ENCODE measurements at regions of chrX and their contacts with region 1.

Region 1: DNA sequence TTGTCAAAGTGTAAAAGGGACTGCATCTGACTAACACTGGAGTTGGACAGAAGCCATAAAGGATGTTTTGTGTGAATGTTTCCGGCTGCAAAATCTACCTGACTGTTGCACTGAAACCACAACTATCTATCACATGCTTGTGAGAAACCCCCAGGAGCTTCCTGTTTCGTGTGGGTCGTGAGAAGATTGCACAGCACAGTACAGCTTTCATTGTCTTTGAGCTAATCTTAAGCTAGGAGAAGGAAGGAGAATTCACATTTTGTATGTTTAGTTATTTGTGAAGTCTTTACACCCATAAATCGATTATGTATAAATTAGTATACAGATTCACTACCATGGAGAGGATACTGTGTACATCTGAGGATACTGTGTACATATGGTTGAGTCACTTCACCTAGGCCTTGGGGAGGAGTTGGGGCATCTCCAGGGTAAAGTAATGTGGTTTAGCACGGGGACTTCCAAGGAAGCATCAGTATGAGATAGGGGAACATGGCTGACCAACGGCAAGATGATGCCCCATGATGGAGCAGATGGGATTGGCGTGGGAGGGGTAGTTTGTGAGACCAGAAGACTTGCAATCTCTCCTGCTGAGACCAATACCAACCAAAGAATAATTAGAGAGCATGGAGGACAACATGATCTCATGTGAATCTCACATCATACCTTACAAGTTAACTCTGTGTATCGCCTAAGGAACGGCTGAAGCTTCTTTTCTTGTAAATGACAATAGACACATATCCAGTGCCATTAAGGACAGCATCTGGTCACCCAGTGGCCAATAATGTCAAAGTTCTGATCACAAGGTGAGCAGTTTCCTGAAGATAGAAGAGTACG is 43.1 kb upstream of the FAM9C start:
- DNase-seq: peak; percentile 64
- H3K4me3 Mint-ChIP-seq: peak overlapping the region; percentile 79
- H3K27ac Mint-ChIP-seq: peak overlapping the region; percentile 100
- H3K4me1 Mint-ChIP-seq: peaks cover 94% of the 10 kb centered on the region
- H3K27me3 Mint-ChIP-seq: no peaks in the 10 kb centered on the region

Region 2: DNA sequence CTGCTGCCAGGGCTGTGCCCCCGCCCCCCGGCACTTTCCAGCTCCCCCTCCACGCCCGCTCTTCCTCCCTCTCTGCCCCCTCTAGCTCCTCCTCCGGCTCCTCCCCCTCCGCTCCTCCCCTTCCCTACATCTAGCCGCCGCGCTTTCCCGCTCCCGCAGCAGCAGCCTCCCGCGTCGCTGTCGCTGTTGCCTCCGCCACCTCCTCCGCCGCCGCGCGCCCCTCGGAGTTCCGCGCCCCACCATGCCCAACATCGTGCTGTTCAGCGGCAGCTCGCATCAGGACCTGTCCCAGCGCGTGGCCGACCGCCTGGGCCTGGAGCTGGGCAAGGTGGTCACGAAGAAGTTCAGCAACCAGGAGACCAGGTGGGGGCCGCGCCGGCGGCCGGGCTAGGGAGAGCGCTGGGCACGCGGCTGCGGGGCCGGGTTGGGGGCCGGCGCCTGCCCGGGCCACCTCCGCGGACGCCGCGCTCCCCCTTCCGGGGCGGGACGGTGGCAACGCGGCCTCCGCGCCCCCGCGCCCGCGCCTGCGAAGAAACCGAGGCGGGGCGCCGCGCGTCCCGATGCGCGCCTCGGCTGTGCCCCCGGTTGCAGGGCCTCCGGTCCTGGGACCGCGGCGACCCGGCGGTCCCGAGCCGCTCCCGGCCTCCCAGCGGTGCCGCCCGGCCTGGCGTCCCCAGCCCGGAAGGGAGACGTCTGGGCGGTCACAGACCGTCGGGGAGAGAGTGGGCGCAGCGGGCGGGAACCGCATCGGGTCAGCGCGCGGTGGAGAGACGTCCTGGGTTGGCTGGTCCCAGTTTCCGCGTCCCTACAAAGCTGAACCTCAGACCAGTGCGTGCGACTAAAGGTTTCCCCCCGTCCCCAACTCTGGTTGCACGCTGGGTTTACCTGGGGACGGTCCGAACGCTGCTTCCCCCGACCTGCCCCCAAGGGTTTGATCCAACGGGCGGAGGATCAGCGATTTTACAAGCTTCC is 296.0 kb before region 1 on chrX and contains the start of gene PRPS2:
- intact Hi-C with region 1: no loop called
- DNase-seq: peak; percentile 62
- H3K4me3 Mint-ChIP-seq: peak within 1 kb of the TSS; percentile 88
- H3K27ac Mint-ChIP-seq: peak within 1 kb of the TSS; percentile 76
- H3K4me1 Mint-ChIP-seq: peaks cover 41% of the 10 kb centered on the region
- H3K27me3 Mint-ChIP-seq: peaks cover 8% of the 10 kb centered on the region
- total RNA-seq, gene PRPS2: 115 and 116 TPM in 2 replicates

Region 3: GRCh38 chrX:12946838-12947544 is 140.5 kb before region 1 on chrX:
- intact Hi-C with region 1: loop called (anchors 1 kb)
- DNase-seq: peak; percentile 65
- H3K4me3 Mint-ChIP-seq: peak overlapping the region; percentile 49
- H3K27ac Mint-ChIP-seq: peak overlapping the region; percentile 95
- H3K4me1 Mint-ChIP-seq: peaks cover 60% of the 10 kb centered on the region
- H3K27me3 Mint-ChIP-seq: no peaks in the 10 kb centered on the region

Region 4: GRCh38 chrX:12984629-12985319 is 102.8 kb before region 1 on chrX:
- intact Hi-C with region 1: loop called (anchors 1 kb)
- DNase-seq: peak; percentile 59
- H3K4me3 Mint-ChIP-seq: peak overlapping the region; percentile 45
- H3K27ac Mint-ChIP-seq: peak overlapping the region; percentile 93
- H3K4me1 Mint-ChIP-seq: peaks cover 65% of the 10 kb centered on the region
- H3K27me3 Mint-ChIP-seq: no peaks in the 10 kb centered on the region

Region 5: DNA sequence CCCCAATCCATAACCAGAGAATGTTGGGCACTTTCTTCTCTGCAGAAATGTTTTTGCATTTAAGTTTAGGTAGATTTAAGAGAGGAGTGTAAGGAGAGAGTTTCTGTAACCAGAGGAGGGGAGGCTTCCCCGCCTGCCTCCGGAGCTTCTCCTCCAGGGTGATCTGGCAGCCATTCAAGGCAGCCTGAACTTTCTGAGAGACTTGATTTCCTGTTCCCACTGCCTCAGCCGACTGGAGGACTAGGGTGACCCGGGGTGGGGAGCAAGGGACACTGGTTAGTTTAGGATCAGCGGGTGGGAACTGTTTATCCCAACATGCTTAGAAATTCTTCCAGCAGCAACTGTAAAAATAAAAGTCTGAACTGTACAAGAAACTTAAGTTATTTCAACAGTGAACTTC is 58.2 kb before region 1 on chrX:
- intact Hi-C with region 1: no loop called
- DNase-seq: no peak
- H3K4me3 Mint-ChIP-seq: peak overlapping the region; percentile 7
- H3K27ac Mint-ChIP-seq: peak overlapping the region; percentile 44
- H3K4me1 Mint-ChIP-seq: peaks cover 57% of the 10 kb centered on the region
- H3K27me3 Mint-ChIP-seq: no peaks in the 10 kb centered on the region

Region 6: DNA sequence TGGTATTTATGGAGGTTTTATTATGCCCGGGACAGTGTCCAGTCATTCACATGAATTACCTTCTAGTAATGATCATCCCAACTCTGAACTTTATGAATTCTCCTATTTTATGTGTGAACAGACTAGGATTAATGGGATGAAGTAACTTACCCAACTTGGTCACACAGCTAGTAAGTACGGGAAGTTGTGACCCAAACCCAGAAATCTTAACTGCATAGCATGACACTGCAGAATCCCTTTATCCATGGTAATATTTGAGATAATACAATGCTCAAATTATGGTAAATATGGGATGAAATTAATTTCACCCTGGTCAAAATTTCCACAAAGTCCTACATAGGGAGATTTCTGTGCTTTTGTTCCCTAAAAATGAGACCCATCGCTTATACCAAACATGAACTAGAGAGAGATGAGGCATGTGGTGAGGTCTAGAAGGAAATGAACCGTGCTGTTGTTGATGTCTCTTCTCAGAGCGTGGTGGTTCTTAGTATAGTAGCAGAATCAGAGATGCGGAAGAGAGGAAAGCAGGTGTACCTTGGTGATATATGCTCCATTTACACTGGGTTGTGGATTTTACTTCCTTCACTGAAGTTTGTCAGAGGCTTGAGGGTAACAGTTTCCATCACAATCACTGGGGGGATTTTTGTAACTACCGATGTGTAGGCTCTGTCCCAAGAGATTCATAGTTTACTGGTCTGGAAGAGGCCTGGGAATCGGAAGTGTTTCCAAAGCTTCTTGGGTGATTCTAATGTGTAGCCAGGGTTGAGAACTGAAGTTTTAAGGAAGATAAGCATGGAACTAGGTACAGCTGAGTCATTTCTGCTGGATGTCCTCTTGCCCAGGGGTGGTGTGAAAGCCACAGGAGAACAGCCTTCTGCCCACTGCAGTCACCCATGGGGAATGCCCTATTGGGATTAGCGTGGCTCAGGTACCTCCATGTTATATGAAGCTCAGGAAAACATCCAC is 13.0 kb before region 1 on chrX:
- intact Hi-C with region 1: loop called (anchors 1 kb)
- DNase-seq: no peak
- H3K4me3 Mint-ChIP-seq: peak overlapping the region; percentile 54
- H3K27ac Mint-ChIP-seq: peak overlapping the region; percentile 92
- H3K4me1 Mint-ChIP-seq: peaks cover 47% of the 10 kb centered on the region
- H3K27me3 Mint-ChIP-seq: no peaks in the 10 kb centered on the region

Region 7: GRCh38 chrX:13376857-13377549 is 289.5 kb after region 1 on chrX:
- intact Hi-C with region 1: loop called (anchors 5 kb)
- DNase-seq: no peak
- H3K4me3 Mint-ChIP-seq: no peak overlapping the region
- H3K27ac Mint-ChIP-seq: peak overlapping the region; percentile 27
- H3K4me1 Mint-ChIP-seq: peaks cover 41% of the 10 kb centered on the region
- H3K27me3 Mint-ChIP-seq: no peaks in the 10 kb centered on the region

Region 8: DNA sequence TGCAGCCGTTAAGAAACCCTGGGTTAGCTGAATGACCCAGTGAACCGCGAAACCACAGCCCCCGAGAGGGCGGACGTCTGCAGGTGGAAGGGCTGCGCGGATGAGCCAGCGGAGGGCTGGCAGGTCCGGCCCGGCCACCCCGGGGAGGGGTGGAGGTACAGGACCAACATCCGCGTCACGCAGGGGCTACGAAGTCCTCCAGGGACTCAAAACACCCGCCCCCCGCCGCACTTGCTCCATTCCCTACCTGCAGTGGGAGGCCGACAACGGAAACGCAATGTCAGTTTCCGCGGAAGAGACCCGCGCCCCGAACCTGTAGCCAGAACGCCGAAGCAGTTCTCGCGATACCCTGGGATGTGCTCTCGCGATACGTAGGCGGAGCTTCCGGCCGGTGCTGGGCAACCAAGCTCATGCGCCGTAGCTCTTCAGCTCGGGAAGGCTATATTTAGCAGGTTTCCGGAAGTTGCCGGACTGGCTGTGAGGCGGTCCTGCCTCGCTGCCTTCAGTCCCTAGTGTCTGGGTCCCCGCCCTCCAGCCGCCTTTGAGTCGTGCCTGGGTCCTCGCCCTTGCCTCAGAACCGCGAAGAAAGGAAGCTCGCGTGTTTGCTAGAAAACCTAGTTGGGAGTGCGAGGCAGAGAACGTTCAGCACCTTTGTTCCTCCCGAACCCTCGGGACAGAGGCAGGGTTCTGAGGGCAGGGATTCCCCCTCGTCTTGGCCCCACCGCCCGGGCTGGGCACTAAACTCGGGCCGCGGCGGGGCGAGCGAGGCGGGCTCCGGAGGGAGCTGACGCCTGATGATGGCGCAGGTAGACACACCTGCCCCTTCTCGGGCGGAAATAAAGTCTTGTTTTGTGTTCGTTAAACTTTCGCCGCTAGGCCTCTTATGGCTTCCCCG is 647.0 kb after region 1 on chrX and contains the starts of genes OFD1 and TRAPPC2:
- intact Hi-C with region 1: loop called (anchors 10 kb)
- DNase-seq: peak; percentile 88
- H3K4me3 Mint-ChIP-seq: peak within 1 kb of the TSS; percentile 97
- H3K27ac Mint-ChIP-seq: peak within 1 kb of the TSS; percentile 98
- H3K4me1 Mint-ChIP-seq: peaks cover 49% of the 10 kb centered on the region
- H3K27me3 Mint-ChIP-seq: peaks cover 2% of the 10 kb centered on the region
- total RNA-seq, gene OFD1: 21.9 and 22.0 TPM in 2 replicates
- total RNA-seq, gene TRAPPC2: 16.4 and 16.5 TPM in 2 replicates